Body of pancreas (tissue), 4 donors: ENCODE measurements at regions of chr9 and their contacts with region 1.

Region 1: DNA sequence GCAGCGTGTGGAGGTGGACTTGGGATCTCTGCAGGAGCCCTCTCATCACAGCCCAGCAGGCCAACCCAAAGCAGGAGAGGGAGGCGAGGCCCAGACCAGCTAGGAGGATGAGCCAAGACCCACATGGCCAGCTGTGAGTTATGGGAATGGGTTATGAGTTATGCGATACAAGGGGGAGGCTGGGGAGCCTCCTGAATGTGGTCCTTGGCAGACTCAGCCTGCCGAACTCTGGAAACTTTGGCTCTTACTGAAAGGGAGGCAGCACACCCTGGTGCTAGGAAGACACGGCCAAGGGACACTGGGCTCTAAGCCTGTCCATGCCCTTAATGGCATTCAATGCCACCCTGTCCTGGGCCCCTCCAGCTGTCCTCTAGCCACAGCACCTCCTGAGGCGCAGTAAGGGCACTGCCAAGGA is 7.7 kb upstream of the VAV2 start:
- DNase-seq: no peak
- ATAC-seq: no peak
- H3K4me3 ChIP-seq: no peak overlapping the region
- H3K27ac ChIP-seq: no peak overlapping the region
- H3K4me1 ChIP-seq: no peaks in the 10 kb centered on the region
- H3K27me3 ChIP-seq: no peaks in the 10 kb centered on the region
- CTCF ChIP-seq: no peak
- POLR2A ChIP-seq: no peak

Region 2: DNA sequence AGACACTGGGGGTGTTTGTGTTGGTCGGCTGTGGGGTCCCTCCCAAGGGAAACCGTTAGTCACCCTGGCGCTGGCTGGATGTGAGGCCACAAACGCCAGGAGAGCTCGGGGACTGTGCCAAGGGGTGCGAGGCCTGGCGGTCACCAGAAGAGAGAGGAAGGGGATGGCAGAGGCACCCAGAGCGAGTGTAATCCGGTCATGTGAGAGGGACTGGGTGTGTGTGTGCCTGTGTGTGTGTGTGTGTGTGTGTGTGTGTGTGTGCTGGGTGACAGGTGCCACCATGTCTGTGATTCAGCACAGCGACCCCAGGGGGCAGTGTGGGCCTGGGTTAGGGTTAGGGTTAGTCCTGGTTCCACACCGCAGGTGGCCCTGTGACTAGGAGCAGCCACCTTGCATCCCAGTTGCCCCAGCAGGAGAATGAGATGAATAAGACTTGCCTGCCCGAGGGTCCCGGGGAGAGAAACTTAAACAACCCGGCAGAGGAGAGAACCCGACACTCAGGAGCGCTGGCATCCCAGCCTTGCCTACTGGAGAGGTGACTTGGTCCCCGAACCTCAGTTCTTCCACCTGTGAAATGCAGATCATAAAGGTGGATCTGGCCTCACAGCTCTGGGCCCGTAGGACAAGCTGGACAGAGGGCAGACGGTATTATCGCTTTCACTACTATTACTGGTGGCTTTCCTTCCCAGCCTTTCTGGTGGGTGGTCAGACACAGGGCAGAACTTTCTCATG is 466.8 kb before region 1 on chr9:
- intact Hi-C with region 1: loop called (anchors 10 kb)
- DNase-seq: peak; percentile 68 to 73 (median 71)
- ATAC-seq: peak; percentile 43
- H3K4me3 ChIP-seq: no peak overlapping the region
- H3K27ac ChIP-seq: peak overlapping the region in 1 of 4 donors; percentile 52
- H3K4me1 ChIP-seq: peaks cover 28% of the 10 kb centered on the region
- H3K27me3 ChIP-seq: no peaks in the 10 kb centered on the region
- CTCF ChIP-seq: peak in 6 of 7 experiments; percentile 20 to 84 (median 56)
- POLR2A ChIP-seq: no peak